ENCODE measurements at regions of chr14 and their contacts with region 1.

Region 1: GRCh38 chr14:73472185-73473114 is 14.1 kb upstream of the NUMB start:
- DNase-seq: peak in 7 of 9 donors; percentile 37 to 71 (median 54)
- ATAC-seq: peak; percentile 84
- H3K4me3 ChIP-seq: no peak overlapping the region
- H3K4me3 Mint-ChIP-seq: no peak overlapping the region
- H3K27ac ChIP-seq: no peak overlapping the region
- H3K27ac Mint-ChIP-seq: no peak overlapping the region
- H3K4me1 ChIP-seq: no peaks in the 10 kb centered on the region
- H3K4me1 Mint-ChIP-seq: peaks cover 0 to 11% (median 4%) of the 10 kb centered on the region in 7 donors
- H3K27me3 ChIP-seq: no peaks in the 10 kb centered on the region
- H3K27me3 Mint-ChIP-seq: no peaks in the 10 kb centered on the region

Region 2: GRCh38 chr14:72948481-72949138 is 523.8 kb before region 1 on chr14:
- CTCF ChIA-PET with region 1: interaction called, 3 read pairs
- POLR2A ChIA-PET with region 1: no interaction called
- intact Hi-C with region 1: loop called in 1 of 2 experiments (anchors 1 kb)
- DNase-seq: peak in 8 of 9 donors; percentile 24 to 63 (median 48)
- ATAC-seq: peak; percentile 65
- H3K4me3 ChIP-seq: no peak overlapping the region
- H3K4me3 Mint-ChIP-seq: no peak overlapping the region
- H3K27ac ChIP-seq: no peak overlapping the region
- H3K27ac Mint-ChIP-seq: no peak overlapping the region
- H3K4me1 ChIP-seq: no peaks in the 10 kb centered on the region
- H3K4me1 Mint-ChIP-seq: peaks cover 0 to 8% (median 0%) of the 10 kb centered on the region in 7 donors
- H3K27me3 ChIP-seq: no peaks in the 10 kb centered on the region
- H3K27me3 Mint-ChIP-seq: no peaks in the 10 kb centered on the region

Region 3: GRCh38 chr14:73173092-73173735 is 299.2 kb before region 1 on chr14:
- CTCF ChIA-PET with region 1: interaction called, 5 read pairs
- POLR2A ChIA-PET with region 1: no interaction called
- intact Hi-C with region 1: loop called in 1 of 2 experiments (anchors 1 kb)
- DNase-seq: peak in 5 of 9 donors; percentile 4 to 25 (median 8)
- ATAC-seq: peak; percentile 57
- H3K4me3 ChIP-seq: no peak overlapping the region
- H3K4me3 Mint-ChIP-seq: no peak overlapping the region
- H3K27ac ChIP-seq: no peak overlapping the region
- H3K27ac Mint-ChIP-seq: peak overlapping the region in 3 of 9 donors; percentile 21 to 25 (median 24)
- H3K4me1 ChIP-seq: no peaks in the 10 kb centered on the region
- H3K4me1 Mint-ChIP-seq: peaks cover 0 to 9% (median 0%) of the 10 kb centered on the region in 7 donors
- H3K27me3 ChIP-seq: no peaks in the 10 kb centered on the region
- H3K27me3 Mint-ChIP-seq: no peaks in the 10 kb centered on the region